Sciatic nerve (tissue), 2 donors: ENCODE measurements at regions of chr9 and their contacts with region 1.

Region 1: GRCh38 chr9:97703437-97704344 is 6.6 kb upstream of the XPA start:
- DNase-seq: no peak
- ATAC-seq: no peak

Region 2: DNA sequence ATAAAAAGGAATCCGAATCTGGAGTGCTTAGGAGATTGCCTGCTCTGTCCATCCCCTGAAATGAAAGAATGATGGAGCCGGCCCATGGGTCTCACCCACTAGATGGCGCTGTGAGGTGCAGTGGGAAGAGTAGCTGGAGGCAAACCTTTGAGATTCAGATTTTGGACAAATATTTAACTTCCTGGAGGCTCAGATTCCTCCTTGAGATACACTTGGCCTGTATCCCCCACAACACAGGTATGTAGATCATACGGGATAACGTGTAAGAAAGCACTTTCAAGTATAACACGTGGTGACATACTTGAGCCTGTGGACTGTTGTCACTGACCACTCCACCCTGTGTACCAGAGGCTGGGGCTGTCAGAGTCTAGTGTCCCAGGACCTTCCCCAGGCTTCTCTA is 186.3 kb after region 1 on chr9:
- intact Hi-C with region 1: loop called (anchors 10 kb)
- DNase-seq: no peak
- ATAC-seq: no peak